ENCODE measurements at regions of chr12 and their contacts with region 1.

Region 1: GRCh38 chr12:49121047-49121696 is 10.0 kb downstream of the TUBA1B start:
- DNase-seq: peak; percentile 79
- ATAC-seq: peak; percentile 90
- H3K4me3 ChIP-seq: no peak overlapping the region
- H3K27ac ChIP-seq: no peak overlapping the region
- H3K4me1 ChIP-seq: 0 out of 2 replicates have a peak, but pooled peaks cover 2% of the 10 kb centered on the region
- H3K27me3 ChIP-seq: no peaks in the 10 kb centered on the region
- CTCF ChIP-seq: peak; percentile 84

Region 2: GRCh38 chr12:49069507-49070346 is 51.4 kb before region 1 on chr12 and contains the start of gene RHEBL1:
- CTCF ChIA-PET with region 1: no interaction called
- POLR2A ChIA-PET with region 1: no interaction called
- intact Hi-C with region 1: loop called (anchors 1 kb)
- DNase-seq: peak; percentile 98
- ATAC-seq: peak; percentile 99
- H3K4me3 ChIP-seq: peak within 1 kb of the TSS; percentile 91
- H3K27ac ChIP-seq: no peak within 1 kb of the TSS
- H3K4me1 ChIP-seq: peaks cover 10% of the 10 kb centered on the region; the same call in 1 of the 2 replicates
- H3K27me3 ChIP-seq: no peaks in the 10 kb centered on the region
- CTCF ChIP-seq: peak; percentile 38
- total RNA-seq, gene RHEBL1: 4.2 and 5.0 TPM in 2 replicates

Region 3: GRCh38 chr12:49088190-49088931 is 32.8 kb before region 1 on chr12:
- CTCF ChIA-PET with region 1: interaction called, 36 read pairs
- POLR2A ChIA-PET with region 1: no interaction called
- intact Hi-C with region 1: loop called (anchors 1 kb)
- DNase-seq: peak; percentile 95
- ATAC-seq: peak; percentile 80
- H3K4me3 ChIP-seq: peak overlapping the region; percentile 59
- H3K27ac ChIP-seq: no peak overlapping the region
- H3K4me1 ChIP-seq: peaks cover 24% of the 10 kb centered on the region
- H3K27me3 ChIP-seq: peaks cover 26% of the 10 kb centered on the region
- CTCF ChIP-seq: peak; percentile 94

Region 4: DNA sequence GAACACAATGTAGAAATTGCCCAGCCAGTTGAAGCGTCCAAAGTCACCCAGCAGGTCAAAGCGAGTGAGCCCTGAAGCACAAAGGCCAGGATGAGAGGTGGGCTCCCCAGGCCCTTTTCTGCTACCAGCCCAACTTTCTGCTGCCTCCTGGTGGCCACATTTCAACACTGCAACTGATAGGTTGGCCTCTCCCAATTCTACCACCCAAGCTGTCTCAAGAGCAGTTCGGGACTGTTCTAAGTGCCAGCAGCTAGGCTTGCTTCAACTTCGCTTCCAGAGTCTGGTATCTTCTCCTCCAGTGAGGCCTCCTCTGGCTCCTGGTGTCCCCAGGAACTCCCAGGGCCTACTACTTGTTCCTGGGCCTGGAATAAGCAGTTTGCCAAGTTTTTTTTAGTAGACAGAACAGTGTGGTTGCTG is 23.1 kb before region 1 on chr12:
- CTCF ChIA-PET with region 1: interaction called, 10 read pairs
- POLR2A ChIA-PET with region 1: no interaction called
- intact Hi-C with region 1: no loop called
- DNase-seq: peak; percentile 58
- ATAC-seq: no peak
- H3K4me3 ChIP-seq: no peak overlapping the region
- H3K27ac ChIP-seq: no peak overlapping the region
- H3K4me1 ChIP-seq: peaks cover 9% of the 10 kb centered on the region; the same call in 1 of the 2 replicates
- H3K27me3 ChIP-seq: peaks cover 14% of the 10 kb centered on the region
- CTCF ChIP-seq: peak; percentile 82

Region 5: DNA sequence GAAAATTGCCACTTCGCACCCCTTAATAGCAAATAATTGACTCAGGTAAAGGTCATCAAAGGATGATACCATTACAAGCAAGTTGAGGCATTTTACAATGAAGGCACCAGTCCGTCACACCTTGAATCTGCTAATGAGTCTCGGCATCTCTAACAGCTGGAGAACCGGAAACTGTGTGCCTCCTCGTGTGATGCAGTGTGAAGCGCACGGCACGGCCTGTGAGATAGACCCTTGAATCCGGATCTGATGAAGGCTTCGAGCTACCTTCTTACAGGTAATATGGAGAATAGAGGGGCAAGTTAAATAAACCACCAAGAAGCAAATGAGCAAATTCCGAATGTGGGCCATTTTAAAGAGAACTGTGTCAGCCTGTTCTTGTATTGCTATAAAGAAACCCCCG is 87.5 kb after region 1 on chr12:
- CTCF ChIA-PET with region 1: no interaction called
- POLR2A ChIA-PET with region 1: no interaction called
- intact Hi-C with region 1: no loop called
- DNase-seq: no peak
- ATAC-seq: no peak
- H3K4me3 ChIP-seq: no peak overlapping the region
- H3K27ac ChIP-seq: no peak overlapping the region
- H3K4me1 ChIP-seq: peaks cover 3% of the 10 kb centered on the region; the same call in 1 of the 2 replicates
- H3K27me3 ChIP-seq: no peaks in the 10 kb centered on the region
- CTCF ChIP-seq: no peak

Measured in PC-3 (cell line).